ENCODE measurements at regions of chr4 and their contacts with region 1.

Region 1: GRCh38 chr4:8594097-8595038 is 1.8 kb downstream of the CPZ start:
- DNase-seq: no peak
- ATAC-seq: peak; percentile 63
- H3K4me3 ChIP-seq: peak overlapping the region; percentile 39
- H3K27ac ChIP-seq: no peak overlapping the region
- H3K4me1 ChIP-seq: no peaks in the 10 kb centered on the region
- H3K27me3 ChIP-seq: peaks cover 37% of the 10 kb centered on the region
- CTCF ChIP-seq: peak; percentile 62

Region 2: DNA sequence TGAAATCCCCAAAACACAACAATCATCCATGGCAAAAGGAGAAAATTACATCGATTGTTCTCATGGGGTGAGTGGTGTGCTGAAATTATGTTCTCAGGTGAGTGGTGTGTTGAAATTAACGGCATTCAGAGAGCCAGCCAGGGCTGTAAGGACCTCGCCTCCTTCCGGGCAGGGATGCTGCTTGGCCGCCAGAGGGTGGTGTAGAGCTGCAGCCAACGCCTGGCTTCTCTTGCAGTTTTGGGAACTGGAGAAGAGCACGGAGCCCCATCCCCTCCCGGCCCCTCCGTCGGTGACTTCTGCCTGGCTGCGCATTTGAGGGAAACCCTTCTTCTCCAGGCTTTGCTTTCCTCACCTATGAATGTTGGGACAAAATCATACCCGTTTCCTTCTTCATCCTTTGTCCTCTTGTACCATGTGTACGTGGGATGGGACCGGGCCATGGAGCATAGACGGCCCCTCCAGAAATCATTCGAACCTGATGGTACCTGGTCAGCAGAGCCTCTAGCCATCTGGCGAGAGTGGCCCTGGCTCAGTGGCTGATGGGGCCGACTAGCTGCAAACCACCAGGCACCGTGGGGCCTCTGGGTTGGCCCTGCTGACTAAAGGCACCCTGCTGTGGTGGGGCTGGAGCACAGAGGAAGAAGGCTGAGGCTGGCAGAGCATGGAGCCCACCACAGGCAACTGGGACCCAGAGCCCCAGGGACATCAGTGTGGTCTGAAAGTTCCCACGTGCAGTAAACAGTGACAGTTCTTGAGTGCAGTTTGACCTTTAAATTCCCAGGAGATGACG is 125.4 kb before region 1 on chr4:
- intact Hi-C with region 1: loop called (anchors 5 kb)
- DNase-seq: peak; percentile 86
- ATAC-seq: peak; percentile 86
- H3K4me3 ChIP-seq: no peak overlapping the region
- H3K27ac ChIP-seq: no peak overlapping the region
- H3K4me1 ChIP-seq: peaks cover 13% of the 10 kb centered on the region
- H3K27me3 ChIP-seq: no peaks in the 10 kb centered on the region
- CTCF ChIP-seq: peak; percentile 92

Measured in upper lobe of right lung (tissue), 1 donor.